ENCODE measurements at regions of chr19 and their contacts with region 1.

Region 1: DNA sequence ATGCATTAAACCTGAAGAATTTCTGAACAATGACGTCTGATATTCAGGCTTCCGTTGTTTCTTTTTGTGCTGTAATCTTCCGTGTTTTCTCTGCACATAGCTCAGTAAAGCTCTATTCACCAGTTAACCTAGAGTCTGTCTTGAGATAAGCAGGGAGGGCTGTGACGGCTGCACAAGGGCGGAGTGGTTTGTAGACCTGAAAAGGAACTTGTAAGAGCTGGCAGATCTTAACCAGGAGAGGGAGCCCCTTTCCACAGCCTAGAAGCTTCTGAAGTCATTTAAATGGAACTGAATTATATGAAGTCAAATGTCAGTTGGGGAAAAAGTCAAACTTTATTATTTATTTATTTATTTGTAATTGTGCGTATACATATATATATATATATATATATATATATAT is 27.5 kb downstream of the DPRX start:
- DNase-seq: peak; percentile 59 to 65
- H3K4me3 ChIP-seq: no peak overlapping the region
- H3K27ac ChIP-seq: no peak overlapping the region
- H3K4me1 ChIP-seq: peaks cover 0 to 16% (median 10%) of the 10 kb centered on the region in 4 experiments; a peak in 5 of 7 replicates
- H3K27me3 ChIP-seq: no peaks in the 10 kb centered on the region
- CTCF ChIP-seq: peak; percentile 27 to 76 (median 72)
- EP300 ChIP-seq: no peak
- POLR2A ChIP-seq: no peak
- RAD21 ChIP-seq: peak; percentile 81 to 88

Region 2: DNA sequence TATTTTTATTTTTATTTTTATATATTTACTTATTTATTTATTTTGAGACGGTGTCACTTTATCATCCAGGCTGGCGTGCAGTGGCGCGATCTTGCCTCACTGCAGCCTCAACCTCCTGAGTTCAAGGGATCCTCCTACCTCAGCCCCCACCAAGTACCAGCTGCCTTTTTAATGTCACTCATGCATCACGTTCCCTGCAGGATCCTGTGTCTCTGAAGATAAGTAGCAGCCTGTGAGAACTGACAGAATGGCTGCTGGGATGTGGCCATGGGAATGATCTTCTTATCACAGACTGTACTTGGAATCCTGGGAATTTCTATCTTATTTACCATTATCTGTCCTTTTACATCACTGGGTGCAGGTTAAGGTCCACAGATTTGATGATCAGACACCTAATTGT is 236.7 kb before region 1 on chr19:
- CTCF ChIA-PET with region 1: no interaction called
- POLR2A ChIA-PET with region 1: no interaction called
- DNase-seq: no peak
- H3K4me3 ChIP-seq: no peak overlapping the region
- H3K27ac ChIP-seq: no peak overlapping the region
- H3K4me1 ChIP-seq: peaks cover 0 to 2% (median 0%) of the 10 kb centered on the region in 4 experiments; a peak in 2 of 7 replicates
- H3K27me3 ChIP-seq: no peaks in the 10 kb centered on the region
- CTCF ChIP-seq: no peak
- EP300 ChIP-seq: no peak
- POLR2A ChIP-seq: no peak
- RAD21 ChIP-seq: no peak

Region 3: GRCh38 chr19:53498581-53498980 is 160.7 kb before region 1 on chr19:
- CTCF ChIA-PET with region 1: no interaction called
- POLR2A ChIA-PET with region 1: no interaction called
- DNase-seq: no peak
- H3K4me3 ChIP-seq: no peak overlapping the region
- H3K27ac ChIP-seq: no peak overlapping the region
- H3K4me1 ChIP-seq: no peaks in the 10 kb centered on the region
- H3K27me3 ChIP-seq: no peaks in the 10 kb centered on the region
- CTCF ChIP-seq: no peak
- EP300 ChIP-seq: no peak
- POLR2A ChIP-seq: no peak
- RAD21 ChIP-seq: no peak

Region 4: DNA sequence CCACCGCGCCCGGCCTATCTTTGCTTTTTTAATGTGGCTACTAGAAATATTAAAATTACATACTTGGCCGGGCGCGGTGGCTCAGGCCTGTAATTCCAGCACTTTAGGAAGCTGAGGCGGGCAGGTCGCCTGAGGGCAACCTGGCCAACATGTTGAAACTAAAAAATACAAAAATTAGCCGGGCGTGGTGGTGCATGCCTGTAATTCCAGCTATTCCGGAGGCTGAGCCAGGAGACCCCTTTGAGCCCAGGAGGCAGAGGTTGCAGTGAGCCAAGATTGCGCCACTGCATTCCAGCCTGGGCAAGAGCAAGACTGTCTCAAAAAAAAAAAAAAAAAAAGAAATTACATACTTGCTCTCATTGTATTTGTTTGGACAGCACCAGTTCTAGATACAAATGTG is 62.3 kb before region 1 on chr19:
- CTCF ChIA-PET with region 1: interaction called, 52 read pairs
- POLR2A ChIA-PET with region 1: interaction called, 11 read pairs
- DNase-seq: no peak
- H3K4me3 ChIP-seq: no peak overlapping the region
- H3K27ac ChIP-seq: peak overlapping the region; percentile 47; the same call in 1 of the 2 replicates
- H3K4me1 ChIP-seq: peaks cover 4 to 28% (median 20%) of the 10 kb centered on the region in 4 experiments
- H3K27me3 ChIP-seq: no peaks in the 10 kb centered on the region
- CTCF ChIP-seq: no peak
- EP300 ChIP-seq: no peak
- POLR2A ChIP-seq: no peak
- RAD21 ChIP-seq: no peak

Region 5: DNA sequence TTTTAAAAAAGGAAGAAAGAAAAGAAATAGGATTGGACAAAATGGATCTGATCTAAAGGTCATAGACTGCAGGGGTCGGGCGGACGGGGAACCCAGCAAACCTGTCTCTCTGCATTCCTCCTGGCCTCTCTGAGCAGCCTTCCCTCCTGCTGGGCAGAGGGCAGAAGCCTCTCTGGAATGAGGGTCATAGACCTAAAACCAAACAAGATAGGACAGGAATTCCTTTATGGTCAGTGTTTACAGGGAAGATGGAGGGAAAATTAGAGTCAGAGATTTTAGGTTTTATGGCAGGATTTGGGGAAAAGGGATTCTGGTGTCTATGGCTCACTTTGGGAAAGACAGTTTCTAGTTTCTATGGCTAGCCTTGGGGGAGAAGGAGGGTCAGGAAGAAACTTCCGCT is 46.5 kb before region 1 on chr19:
- CTCF ChIA-PET with region 1: interaction called, 10 read pairs
- POLR2A ChIA-PET with region 1: interaction called, 4 read pairs
- DNase-seq: peak; percentile 38 to 77
- H3K4me3 ChIP-seq: peak overlapping the region in 1 of 4 experiments; percentile 29; a peak in 1 of 8 replicates
- H3K27ac ChIP-seq: peak overlapping the region; percentile 77
- H3K4me1 ChIP-seq: peaks cover 0 to 10% (median 6%) of the 10 kb centered on the region in 4 experiments; a peak in 6 of 7 replicates
- H3K27me3 ChIP-seq: no peaks in the 10 kb centered on the region
- CTCF ChIP-seq: no peak
- EP300 ChIP-seq: peak in 1 of 2 experiments; percentile 91; a peak in 1 of 3 replicates
- POLR2A ChIP-seq: peak in 1 of 2 experiments; percentile 45; a peak in 1 of 3 replicates
- RAD21 ChIP-seq: peak in 1 of 2 experiments; percentile 21; a peak in 1 of 4 replicates

Region 6: DNA sequence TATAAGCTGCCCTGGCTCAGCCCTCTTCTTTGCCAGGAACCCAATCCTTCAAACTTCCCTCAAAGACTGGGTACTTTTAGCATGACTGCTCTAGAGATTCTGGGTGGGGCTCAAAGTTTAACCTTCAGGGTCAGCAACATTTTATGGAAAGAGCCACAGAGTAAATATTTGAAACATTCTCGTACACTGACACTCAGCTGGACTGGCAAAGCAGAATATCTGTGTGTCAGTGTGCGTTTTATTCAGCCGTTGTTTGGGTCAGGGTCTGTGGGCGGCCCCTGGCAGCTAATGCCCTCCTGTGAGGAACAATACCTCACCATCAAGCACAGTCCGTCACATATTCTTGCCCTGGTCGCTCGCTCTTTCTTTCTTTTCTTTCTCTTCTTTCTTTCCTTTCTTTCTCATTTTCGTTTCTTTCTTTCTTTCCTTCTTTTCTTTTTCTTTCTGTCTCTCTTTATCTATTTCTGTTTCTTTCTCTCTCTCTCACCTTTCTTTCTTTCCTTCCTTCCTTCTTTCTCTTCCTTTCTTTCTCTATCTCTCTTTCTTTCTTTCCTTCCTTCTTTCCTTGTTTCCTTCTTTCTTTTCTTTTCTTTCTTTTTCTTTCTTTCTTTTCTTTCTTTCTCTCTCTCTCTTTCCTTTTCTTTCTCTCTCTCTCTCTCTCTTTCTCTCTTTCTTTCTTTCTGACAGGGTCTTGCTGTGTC is 16.8 kb before region 1 on chr19:
- CTCF ChIA-PET with region 1: interaction called, 32 read pairs
- POLR2A ChIA-PET with region 1: interaction called, 5 read pairs
- DNase-seq: no peak
- H3K4me3 ChIP-seq: no peak overlapping the region
- H3K27ac ChIP-seq: no peak overlapping the region
- H3K4me1 ChIP-seq: peaks cover 6 to 15% (median 9%) of the 10 kb centered on the region in 4 experiments
- H3K27me3 ChIP-seq: no peaks in the 10 kb centered on the region
- CTCF ChIP-seq: no peak
- EP300 ChIP-seq: no peak
- POLR2A ChIP-seq: no peak
- RAD21 ChIP-seq: no peak

Region 7: GRCh38 chr19:53671663-53672062 is 12.4 kb after region 1 on chr19:
- CTCF ChIA-PET with region 1: interaction called, 18 read pairs
- POLR2A ChIA-PET with region 1: interaction called, 4 read pairs
- DNase-seq: no peak
- H3K4me3 ChIP-seq: no peak overlapping the region
- H3K27ac ChIP-seq: no peak overlapping the region
- H3K4me1 ChIP-seq: peaks cover 4 to 10% (median 8%) of the 10 kb centered on the region in 4 experiments
- H3K27me3 ChIP-seq: no peaks in the 10 kb centered on the region
- CTCF ChIP-seq: no peak; a peak in 1 of 4 replicates
- EP300 ChIP-seq: no peak
- POLR2A ChIP-seq: no peak
- RAD21 ChIP-seq: peak; percentile 23 to 47; a peak in 3 of 4 replicates

Region 8: GRCh38 chr19:53792721-53793433 is 133.6 kb after region 1 on chr19:
- CTCF ChIA-PET with region 1: interaction called, 11 read pairs
- POLR2A ChIA-PET with region 1: interaction called, 3 read pairs
- DNase-seq: peak; percentile 88 to 94
- H3K4me3 ChIP-seq: no peak overlapping the region
- H3K27ac ChIP-seq: no peak overlapping the region
- H3K4me1 ChIP-seq: no peaks in the 10 kb centered on the region
- H3K27me3 ChIP-seq: no peaks in the 10 kb centered on the region
- CTCF ChIP-seq: peak; percentile 83 to 99 (median 99)
- EP300 ChIP-seq: no peak
- POLR2A ChIP-seq: no peak
- RAD21 ChIP-seq: peak; percentile 91

Measured in H1 (cell line).